ENCODE measurements at regions of chr6 and their contacts with region 1.

Region 1: GRCh38 chr6:31580807-31581433 is 1.3 kb downstream of the LTB start:
- DNase-seq: peak; percentile 74 to 93 (median 88)
- H3K4me3 ChIP-seq: peak overlapping the region; percentile 44 to 99 (median 82)
- H3K27ac ChIP-seq: peak overlapping the region in 58 of 59 donors; percentile 5 to 93 (median 76)
- H3K27me3 ChIP-seq: no peaks in the 10 kb centered on the region
- CTCF ChIP-seq: peak; percentile 64 to 99 (median 97)

Region 2: GRCh38 chr6:31597006-31597405 is 16.1 kb after region 1 on chr6:
- intact Hi-C with region 1: loop called in 1 of 2 experiments (anchors 1 kb)
- DNase-seq: no peak
- H3K4me3 ChIP-seq: no peak overlapping the region
- H3K27ac ChIP-seq: no peak overlapping the region
- H3K27me3 ChIP-seq: no peaks in the 10 kb centered on the region
- CTCF ChIP-seq: peak in 39 of 56 donors; percentile 7 to 50 (median 30)

Measured in dorsolateral prefrontal cortex (tissue), 120 donors.